ENCODE measurements at regions of chr3 and their contacts with region 1.

Region 1: GRCh38 chr3:115147329-115148141 is 447 bp upstream of the ZBTB20 start:
- DNase-seq: peak; percentile 100
- H3K4me3 Mint-ChIP-seq: peak overlapping the region; percentile 82
- H3K27ac Mint-ChIP-seq: peak overlapping the region; percentile 97
- H3K4me1 Mint-ChIP-seq: peaks cover 6% of the 10 kb centered on the region
- H3K27me3 Mint-ChIP-seq: no peaks in the 10 kb centered on the region
- CTCF ChIP-seq: no peak

Region 2: DNA sequence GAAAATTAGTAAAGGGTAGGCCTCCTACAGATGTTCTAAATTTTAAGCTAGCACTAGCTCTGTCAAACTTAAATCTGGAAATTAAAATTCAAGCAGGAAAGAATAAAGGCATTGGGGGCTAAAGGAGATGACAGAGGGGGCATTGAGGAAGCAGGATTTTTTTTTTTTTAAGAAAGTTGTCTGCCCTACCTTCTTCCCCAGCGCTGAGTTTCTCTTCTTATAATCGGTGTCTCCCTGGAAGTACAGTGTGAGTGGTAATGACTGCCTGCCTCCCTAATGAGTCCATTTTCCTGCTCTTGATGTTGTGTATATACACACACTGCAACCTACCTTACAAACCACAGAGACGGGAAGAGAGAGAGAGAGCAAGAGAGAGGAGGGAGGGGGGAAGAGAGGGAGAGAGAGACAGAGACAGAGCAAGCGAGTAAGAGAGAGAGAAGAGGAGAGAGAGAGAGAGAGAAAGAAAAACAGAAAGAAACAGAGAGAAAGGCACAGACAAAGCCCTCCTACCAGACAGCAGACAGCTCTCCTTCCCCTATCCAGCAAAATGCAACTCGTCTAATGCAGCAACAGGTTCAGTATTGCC is 47.5 kb before region 1 on chr3:
- CTCF ChIA-PET with region 1: interaction called, 6 read pairs
- POLR2A ChIA-PET with region 1: interaction called, 49 read pairs
- intact Hi-C with region 1: loop called (anchors 5 kb)
- DNase-seq: peak; percentile 42
- H3K4me3 Mint-ChIP-seq: peak overlapping the region; percentile 68
- H3K27ac Mint-ChIP-seq: peak overlapping the region; percentile 52
- H3K4me1 Mint-ChIP-seq: peaks cover 19% of the 10 kb centered on the region
- H3K27me3 Mint-ChIP-seq: no peaks in the 10 kb centered on the region
- CTCF ChIP-seq: no peak

Region 3: DNA sequence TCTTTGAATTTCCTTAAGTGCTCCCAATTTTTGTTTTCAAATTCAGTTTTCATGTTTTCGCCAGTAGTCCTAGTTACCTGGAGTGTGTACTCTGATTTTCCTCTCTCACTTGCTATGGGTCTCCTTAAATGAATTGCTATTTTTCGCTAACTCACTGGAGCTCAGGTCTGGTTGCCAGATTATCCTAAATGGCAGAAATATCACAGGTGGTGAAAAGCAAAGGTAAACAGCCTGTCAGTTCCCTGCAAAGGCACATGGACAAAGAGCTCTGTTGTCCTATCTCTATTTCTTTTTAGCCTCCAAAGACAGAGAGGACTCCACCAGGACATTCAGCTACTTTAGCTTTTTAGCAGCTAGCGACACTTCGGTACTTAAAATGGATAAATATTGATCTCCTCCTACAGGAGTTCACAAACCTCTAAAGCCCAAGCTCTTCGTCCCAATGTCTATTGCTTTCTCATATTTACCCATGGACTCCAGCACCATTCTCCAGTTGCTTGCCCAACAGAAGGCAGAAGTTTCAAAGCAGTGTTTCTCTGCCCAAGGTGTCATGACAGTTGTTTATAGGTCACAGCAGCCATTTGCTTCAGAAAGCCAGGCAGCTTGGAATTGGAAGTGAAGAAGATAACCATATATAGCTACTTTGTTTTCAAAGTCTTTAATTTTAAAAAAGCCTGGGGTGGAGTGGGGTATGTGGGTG is 12.7 kb before region 1 on chr3:
- CTCF ChIA-PET with region 1: no interaction called
- POLR2A ChIA-PET with region 1: interaction called, 48 read pairs
- intact Hi-C with region 1: no loop called
- DNase-seq: no peak
- H3K4me3 Mint-ChIP-seq: no peak overlapping the region
- H3K27ac Mint-ChIP-seq: no peak overlapping the region
- H3K4me1 Mint-ChIP-seq: no peaks in the 10 kb centered on the region
- H3K27me3 Mint-ChIP-seq: no peaks in the 10 kb centered on the region
- CTCF ChIP-seq: no peak

Region 4: DNA sequence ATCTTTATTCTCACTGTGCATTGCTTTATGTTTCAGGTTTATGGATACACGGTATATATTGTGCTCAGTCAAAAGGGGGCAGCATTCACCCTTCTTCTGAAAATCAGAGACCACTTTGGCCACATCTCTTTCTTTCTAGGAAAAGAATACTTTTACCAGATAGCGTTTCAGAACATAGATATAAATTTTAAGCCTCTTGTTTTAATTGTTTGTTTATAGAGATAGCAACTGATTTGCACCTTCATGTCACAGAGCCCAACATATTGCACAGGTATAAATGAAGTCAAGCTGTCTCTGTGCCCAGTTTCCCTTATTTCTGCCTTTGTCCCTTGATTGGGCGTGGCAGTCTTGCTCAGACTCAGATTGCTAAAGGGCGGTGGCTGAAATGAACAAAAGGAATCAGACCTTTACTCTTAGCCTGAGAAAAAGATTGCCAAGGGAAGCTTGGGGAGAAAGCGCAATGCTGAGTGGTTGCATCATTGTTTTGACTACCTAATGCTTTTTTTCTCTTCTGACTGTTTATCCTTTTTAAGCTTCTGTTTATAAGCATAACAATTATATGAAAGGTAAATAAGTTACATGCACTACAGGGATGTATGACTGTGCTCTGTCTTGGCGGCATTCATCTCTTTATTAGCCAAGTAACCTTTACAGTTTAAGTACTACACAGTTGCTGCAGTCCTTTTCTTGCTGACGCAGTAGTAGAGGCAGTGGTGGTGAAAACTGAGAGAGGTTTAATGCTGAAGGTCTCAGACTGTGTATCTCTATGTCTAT is 70.3 kb after region 1 on chr3:
- CTCF ChIA-PET with region 1: no interaction called
- POLR2A ChIA-PET with region 1: no interaction called
- intact Hi-C with region 1: no loop called
- DNase-seq: peak; percentile 71
- H3K4me3 Mint-ChIP-seq: no peak overlapping the region
- H3K27ac Mint-ChIP-seq: peak overlapping the region; percentile 9
- H3K4me1 Mint-ChIP-seq: peaks cover 8% of the 10 kb centered on the region
- H3K27me3 Mint-ChIP-seq: no peaks in the 10 kb centered on the region
- CTCF ChIP-seq: peak; percentile 81

Region 5: GRCh38 chr3:115293321-115293720 is 145.8 kb after region 1 on chr3:
- CTCF ChIA-PET with region 1: no interaction called
- POLR2A ChIA-PET with region 1: no interaction called
- intact Hi-C with region 1: no loop called
- DNase-seq: no peak
- H3K4me3 Mint-ChIP-seq: no peak overlapping the region
- H3K27ac Mint-ChIP-seq: no peak overlapping the region
- H3K4me1 Mint-ChIP-seq: no peaks in the 10 kb centered on the region
- H3K27me3 Mint-ChIP-seq: no peaks in the 10 kb centered on the region
- CTCF ChIP-seq: no peak

Measured in MCF 10A (cell line).